ENCODE measurements at regions of chr16 and their contacts with region 1.

Region 1: DNA sequence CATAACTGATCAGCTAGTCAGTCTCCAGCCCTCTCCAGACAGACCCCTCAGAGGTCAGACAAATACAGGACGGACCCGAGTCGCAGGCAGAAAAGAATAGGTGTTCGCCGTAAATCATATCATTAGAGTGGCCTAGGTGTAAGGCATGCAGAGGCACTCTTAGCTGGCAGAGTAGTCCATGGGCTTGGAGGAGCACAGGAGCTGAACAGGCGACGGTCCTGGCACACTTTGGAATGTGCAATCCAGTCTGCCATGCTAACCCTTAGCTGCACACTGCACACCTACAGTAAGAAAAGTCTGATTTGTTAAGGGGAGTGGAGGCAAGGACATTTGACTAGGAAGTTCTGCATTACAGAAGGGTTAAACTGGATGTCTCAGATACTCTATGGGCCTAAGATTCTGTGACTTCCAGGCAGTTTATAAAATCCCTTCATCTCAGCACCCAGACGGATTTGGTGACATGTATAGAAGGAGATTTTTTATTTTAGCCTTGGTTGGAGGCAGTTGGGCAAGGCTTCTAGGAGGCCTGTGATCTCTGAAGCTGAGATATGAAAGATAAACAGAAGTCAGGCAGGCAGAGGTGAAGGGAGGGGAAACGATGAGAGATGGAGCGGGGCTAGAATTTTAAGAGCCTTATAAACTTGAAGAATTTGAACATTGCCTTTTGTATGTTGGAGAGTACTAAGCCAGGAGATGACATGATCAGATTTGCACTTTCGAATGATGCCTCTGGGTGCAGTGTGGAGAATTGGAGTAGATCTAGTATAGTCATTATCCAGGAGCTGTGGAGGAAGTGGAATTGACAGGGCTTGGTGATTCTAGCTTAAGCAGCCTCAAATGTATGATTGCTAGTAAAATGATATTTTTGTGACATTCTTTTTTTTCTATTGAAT is 34.6 kb upstream of the SLC5A11 start:
- DNase-seq: no peak
- ATAC-seq: no peak
- H3K4me3 ChIP-seq: no peak overlapping the region
- H3K4me3 Mint-ChIP-seq: no peak overlapping the region
- H3K27ac ChIP-seq: no peak overlapping the region
- H3K27ac Mint-ChIP-seq: peak overlapping the region in 5 of 9 donors; percentile 3 to 28 (median 18)
- H3K4me1 ChIP-seq: no peaks in the 10 kb centered on the region
- H3K4me1 Mint-ChIP-seq: no peaks in the 10 kb centered on the region
- H3K27me3 ChIP-seq: no peaks in the 10 kb centered on the region
- H3K27me3 Mint-ChIP-seq: no peaks in the 10 kb centered on the region

Region 2: DNA sequence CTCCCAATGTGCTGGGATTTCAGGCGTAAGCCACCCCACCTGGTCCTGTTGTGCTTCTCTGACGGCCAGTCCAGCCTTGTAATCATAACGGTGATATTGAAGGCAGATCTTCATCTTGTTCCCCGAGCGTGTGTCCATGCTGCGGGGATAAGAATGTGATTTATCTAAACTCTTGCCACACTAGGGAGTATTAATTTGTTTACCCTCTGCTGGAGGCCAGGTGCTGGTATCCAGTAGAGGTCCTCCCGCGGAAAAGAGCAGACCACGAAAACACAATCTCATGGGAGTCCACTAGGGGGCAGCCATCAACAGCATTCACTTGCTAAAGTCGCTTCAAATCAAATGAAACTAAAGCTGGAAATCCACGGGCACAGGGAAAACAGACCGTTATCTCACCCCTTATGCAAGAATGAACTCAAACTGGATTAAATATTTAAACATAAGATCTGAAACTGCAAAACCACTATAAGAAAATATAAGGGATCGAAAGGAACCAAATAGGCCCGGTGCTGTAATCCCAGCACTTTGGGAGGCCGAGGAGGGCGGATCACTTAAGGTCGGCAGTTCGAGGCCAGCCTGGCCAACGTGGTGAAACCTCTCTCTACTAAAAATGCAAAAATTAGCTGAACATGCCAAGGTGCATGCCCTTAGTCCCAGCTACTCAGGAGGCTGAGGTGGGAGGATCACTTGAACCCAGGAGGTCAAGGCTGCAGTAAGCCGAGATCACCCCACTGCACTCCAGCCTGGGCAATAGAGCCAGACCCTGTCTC is 294.1 kb before region 1 on chr16:
- CTCF ChIA-PET with region 1: no interaction called
- POLR2A ChIA-PET with region 1: no interaction called
- intact Hi-C with region 1: loop called in 1 of 2 experiments (anchors 5 kb)
- DNase-seq: peak; percentile 46 to 75 (median 68)
- ATAC-seq: peak; percentile 91
- H3K4me3 ChIP-seq: no peak overlapping the region
- H3K4me3 Mint-ChIP-seq: peak overlapping the region in 8 of 10 donors; percentile 14 to 71 (median 44)
- H3K27ac ChIP-seq: no peak overlapping the region
- H3K27ac Mint-ChIP-seq: peak overlapping the region in 3 of 9 donors; percentile 1 to 88 (median 5)
- H3K4me1 ChIP-seq: no peaks in the 10 kb centered on the region
- H3K4me1 Mint-ChIP-seq: peaks cover 4 to 14% (median 6%) of the 10 kb centered on the region in 7 donors
- H3K27me3 ChIP-seq: no peaks in the 10 kb centered on the region
- H3K27me3 Mint-ChIP-seq: peaks cover 0 to 7% (median 0%) of the 10 kb centered on the region in 5 donors

Region 3: GRCh38 chr16:24729362-24729984 is 81.7 kb before region 1 on chr16 and contains the start of gene TNRC6A:
- CTCF ChIA-PET with region 1: no interaction called
- POLR2A ChIA-PET with region 1: interaction called, 3 read pairs
- intact Hi-C with region 1: loop called in 1 of 2 experiments (anchors 5 kb)
- DNase-seq: peak; percentile 68 to 86 (median 78)
- ATAC-seq: peak; percentile 88
- H3K4me3 ChIP-seq: peak within 1 kb of the TSS; percentile 90
- H3K4me3 Mint-ChIP-seq: peak within 1 kb of the TSS; percentile 89 to 100 (median 96)
- H3K27ac ChIP-seq: peak within 1 kb of the TSS; percentile 98
- H3K27ac Mint-ChIP-seq: peak within 1 kb of the TSS; percentile 93 to 100 (median 98)
- H3K4me1 ChIP-seq: peaks cover 17 to 20% of the 10 kb centered on the region in 2 donors
- H3K4me1 Mint-ChIP-seq: peaks cover 30 to 55% (median 45%) of the 10 kb centered on the region in 7 donors
- H3K27me3 ChIP-seq: no peaks in the 10 kb centered on the region
- H3K27me3 Mint-ChIP-seq: peaks cover 0 to 6% (median 0%) of the 10 kb centered on the region in 5 donors
- total RNA-seq, gene TNRC6A: 46.9 to 110 (median 77.8) TPM

Region 4: DNA sequence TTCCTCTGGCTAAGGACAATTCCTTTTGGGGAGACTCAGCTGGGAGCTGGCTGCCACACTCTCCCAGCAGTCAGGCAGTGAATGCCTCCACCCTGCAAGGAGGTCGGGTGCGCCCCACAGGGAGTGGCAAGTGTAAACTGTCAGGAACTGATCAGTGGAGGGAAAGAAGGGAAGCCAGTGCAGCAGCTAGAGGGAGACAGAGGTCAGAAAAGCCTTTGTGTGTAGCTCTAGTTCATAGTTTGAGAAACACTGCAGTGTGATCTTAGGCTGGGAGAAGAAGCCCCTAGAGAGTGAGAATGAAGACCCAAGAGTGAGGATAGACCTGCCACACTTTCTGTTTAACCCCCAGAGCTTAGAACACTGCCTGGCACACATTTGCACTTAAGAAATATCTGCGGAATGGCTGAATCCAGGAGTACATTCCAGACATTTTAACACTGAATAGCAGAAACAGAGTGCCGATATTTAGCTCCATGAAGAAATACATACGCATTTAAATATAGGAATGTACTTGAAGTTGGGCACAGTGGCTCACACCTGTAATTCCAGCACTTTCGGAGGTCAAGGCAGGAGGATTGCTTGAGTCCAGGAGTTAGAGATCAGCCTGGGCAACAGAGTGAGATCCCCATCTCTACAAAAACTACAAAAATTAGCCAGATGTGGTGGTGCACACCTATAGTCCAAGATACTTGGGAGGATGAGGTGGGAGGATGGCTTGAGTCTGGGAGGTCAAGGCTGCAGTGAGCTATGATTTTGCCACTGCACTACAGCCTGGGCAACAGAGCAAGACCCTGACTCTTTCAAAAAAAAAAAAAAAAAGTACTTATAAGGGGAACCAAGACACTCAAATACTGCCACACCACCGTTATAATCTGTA is 23.5 kb after region 1 on chr16:
- CTCF ChIA-PET with region 1: no interaction called
- POLR2A ChIA-PET with region 1: no interaction called
- intact Hi-C with region 1: no loop called
- DNase-seq: no peak
- ATAC-seq: no peak
- H3K4me3 ChIP-seq: no peak overlapping the region
- H3K4me3 Mint-ChIP-seq: no peak overlapping the region
- H3K27ac ChIP-seq: no peak overlapping the region
- H3K27ac Mint-ChIP-seq: no peak overlapping the region
- H3K4me1 ChIP-seq: no peaks in the 10 kb centered on the region
- H3K4me1 Mint-ChIP-seq: no peaks in the 10 kb centered on the region
- H3K27me3 ChIP-seq: no peaks in the 10 kb centered on the region
- H3K27me3 Mint-ChIP-seq: peaks cover 0 to 2% (median 0%) of the 10 kb centered on the region in 5 donors

Region 5: GRCh38 chr16:24943473-24943872 is 132.3 kb after region 1 on chr16:
- CTCF ChIA-PET with region 1: no interaction called
- POLR2A ChIA-PET with region 1: no interaction called
- intact Hi-C with region 1: loop called in 1 of 2 experiments (anchors 10 kb)
- DNase-seq: no peak
- ATAC-seq: no peak
- H3K4me3 ChIP-seq: no peak overlapping the region
- H3K4me3 Mint-ChIP-seq: no peak overlapping the region
- H3K27ac ChIP-seq: no peak overlapping the region
- H3K27ac Mint-ChIP-seq: peak overlapping the region in 2 of 9 donors; percentile 44 to 66
- H3K4me1 ChIP-seq: no peaks in the 10 kb centered on the region
- H3K4me1 Mint-ChIP-seq: peaks cover 0 to 5% (median 0%) of the 10 kb centered on the region in 7 donors
- H3K27me3 ChIP-seq: no peaks in the 10 kb centered on the region
- H3K27me3 Mint-ChIP-seq: no peaks in the 10 kb centered on the region

Measured in naive thymus-derived CD4-positive, alpha-beta T cell (primary cell).